K562 (cell line): ENCODE measurements at regions of chr11 and their contacts with region 1.

Region 1: GRCh38 chr11:111756097-111756496 is 10.1 kb downstream of the PPP2R1B start:
- DNase-seq: no peak
- ATAC-seq: no peak
- H3K4me3 ChIP-seq: no peak overlapping the region
- H3K27ac ChIP-seq: no peak overlapping the region
- H3K4me1 ChIP-seq: no peaks in the 10 kb centered on the region
- H3K27me3 ChIP-seq: no peaks in the 10 kb centered on the region
- CTCF ChIP-seq: no peak
- EP300 ChIP-seq: no peak
- POLR2A ChIP-seq: no peak
- RAD21 ChIP-seq: no peak

Region 2: DNA sequence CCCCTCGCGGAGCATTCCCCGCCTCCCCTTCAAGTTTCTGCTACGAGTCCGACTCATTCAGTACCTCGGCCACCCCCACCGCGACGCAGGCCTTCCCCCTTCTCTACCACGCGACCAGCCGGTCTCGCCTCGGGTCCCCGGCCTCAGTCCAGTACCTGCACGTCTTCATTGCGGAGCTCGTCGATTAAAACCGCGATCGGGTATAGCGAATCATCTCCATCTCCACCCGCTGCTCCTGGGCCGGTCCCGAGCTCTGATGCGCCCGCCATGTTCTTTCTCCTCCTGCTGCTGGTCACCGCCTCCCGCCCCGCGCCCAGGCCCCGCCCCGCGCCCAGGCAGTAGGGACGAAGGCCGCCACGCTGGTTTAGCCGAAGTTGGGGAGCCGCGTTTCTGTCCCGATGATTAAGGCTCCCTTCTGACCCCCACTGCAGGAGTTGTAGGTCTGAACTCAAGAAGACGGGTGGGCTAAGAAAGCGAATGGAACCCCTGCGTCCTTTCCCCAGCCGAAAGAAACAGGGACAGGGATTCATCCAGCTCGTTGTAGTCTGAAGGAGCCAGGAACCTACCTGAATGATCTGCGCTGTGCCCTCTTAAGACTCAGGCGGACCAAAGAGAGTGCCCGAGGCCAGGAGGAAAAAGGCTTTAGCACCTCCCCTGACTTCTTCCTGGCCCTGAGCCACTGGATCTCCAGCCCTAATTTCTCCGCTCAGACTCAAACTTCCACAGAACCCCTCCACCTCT is 10.2 kb after region 1 on chr11 and contains the start of gene PPP2R1B:
- CTCF ChIA-PET with region 1: no interaction called
- POLR2A ChIA-PET with region 1: interaction called, 24 read pairs
- in situ Hi-C with region 1: no loop called
- intact Hi-C with region 1: no loop called
- DNase-seq: peak; percentile 78 to 96 (median 95)
- ATAC-seq: peak; percentile 96
- H3K4me3 ChIP-seq: peak within 1 kb of the TSS; percentile 84
- H3K27ac ChIP-seq: peak within 1 kb of the TSS; percentile 90
- H3K4me1 ChIP-seq: peaks cover 7% of the 10 kb centered on the region in 2 experiments; a peak in 2 of 5 replicates
- H3K27me3 ChIP-seq: no peaks in the 10 kb centered on the region
- CTCF ChIP-seq: no peak
- EP300 ChIP-seq: no peak
- POLR2A ChIP-seq: peak; percentile 92
- RAD21 ChIP-seq: no peak
- polyA plus RNA-seq, gene PPP2R1B: 50.9 to 68.5 TPM